Activated naive CD4-positive, alpha-beta T cell treated with anti-CD3 and anti-CD28 coated beads for 36 hours (primary cell): ENCODE measurements at regions of chr14 and their contacts with region 1.

Region 1: GRCh38 chr14:24114536-24115450 is at the starts of genes DCAF11 and NRL:
- DNase-seq: peak; percentile 99
- H3K4me3 Mint-ChIP-seq: peak within 1 kb of the TSS; percentile 99
- H3K27ac Mint-ChIP-seq: peak within 1 kb of the TSS; percentile 100
- H3K4me1 Mint-ChIP-seq: peaks cover 18% of the 10 kb centered on the region
- H3K27me3 Mint-ChIP-seq: no peaks in the 10 kb centered on the region
- total RNA-seq, gene DCAF11: 79.4 to 84.0 TPM
- total RNA-seq, gene NRL: 1.7 to 1.9 TPM

Region 2: GRCh38 chr14:23984891-23985602 is 129.7 kb before region 1 on chr14:
- CTCF ChIA-PET with region 1: interaction called, 3 read pairs
- intact Hi-C with region 1: loop called (anchors 1 kb)
- DNase-seq: no peak
- H3K4me3 Mint-ChIP-seq: no peak overlapping the region
- H3K27ac Mint-ChIP-seq: no peak overlapping the region
- H3K4me1 Mint-ChIP-seq: peaks cover 26% of the 10 kb centered on the region
- H3K27me3 Mint-ChIP-seq: no peaks in the 10 kb centered on the region

Region 3: GRCh38 chr14:24086193-24086955 is 28.4 kb before region 1 on chr14:
- CTCF ChIA-PET with region 1: interaction called, 226 read pairs
- intact Hi-C with region 1: loop called (anchors 1 kb)
- DNase-seq: no peak
- H3K4me3 Mint-ChIP-seq: no peak overlapping the region
- H3K27ac Mint-ChIP-seq: no peak overlapping the region
- H3K4me1 Mint-ChIP-seq: peaks cover 7% of the 10 kb centered on the region
- H3K27me3 Mint-ChIP-seq: no peaks in the 10 kb centered on the region

Region 4: DNA sequence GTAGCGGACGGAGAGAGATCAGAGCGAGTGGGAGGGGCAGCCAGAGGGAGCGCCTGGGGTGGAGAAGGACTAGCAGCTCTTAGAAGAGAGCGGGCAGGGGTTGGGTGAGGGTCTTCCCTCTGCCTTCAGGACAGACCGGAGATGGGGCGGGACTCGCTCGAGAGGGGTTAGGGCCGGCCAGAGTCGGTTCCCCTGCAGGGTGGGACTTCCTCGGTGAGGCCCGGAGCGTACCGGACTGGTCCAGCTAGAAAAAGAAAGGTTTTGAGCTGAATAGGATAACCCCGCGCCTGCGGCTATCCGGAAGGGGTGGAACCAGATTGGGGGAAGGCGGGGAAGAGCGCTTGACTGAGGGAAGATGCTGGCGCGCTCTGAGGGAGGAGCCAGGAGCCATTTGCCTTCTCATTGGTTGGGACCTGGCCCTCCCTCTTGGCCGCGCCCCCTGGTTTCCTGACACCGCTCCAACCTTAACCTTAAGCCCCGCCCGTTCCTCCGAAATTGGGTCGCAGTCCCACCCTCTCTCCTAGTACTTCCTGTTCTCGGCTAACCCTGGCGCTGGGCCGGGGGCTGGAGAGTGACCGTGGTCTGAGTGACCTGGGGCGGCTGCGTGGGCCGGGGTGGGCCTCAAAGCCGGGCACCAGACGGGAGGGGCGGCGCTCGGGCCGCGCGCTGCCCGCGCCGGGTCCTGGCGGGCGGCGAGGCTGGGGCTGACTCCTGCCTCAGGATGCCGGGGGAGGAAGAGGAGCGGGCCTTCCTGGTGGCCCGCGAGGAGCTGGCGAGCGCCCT is 32.4 kb after region 1 on chr14 and contains the start of gene RNF31:
- CTCF ChIA-PET with region 1: interaction called, 10 read pairs
- intact Hi-C with region 1: loop called (anchors 1 kb)
- DNase-seq: peak; percentile 99
- H3K4me3 Mint-ChIP-seq: peak within 1 kb of the TSS; percentile 97
- H3K27ac Mint-ChIP-seq: peak within 1 kb of the TSS; percentile 99
- H3K4me1 Mint-ChIP-seq: peaks cover 54% of the 10 kb centered on the region
- H3K27me3 Mint-ChIP-seq: no peaks in the 10 kb centered on the region
- total RNA-seq, gene RNF31: 51.1 to 53.8 TPM

Region 5: GRCh38 chr14:24215495-24216344 is 100.9 kb after region 1 on chr14 and contains the start of gene MDP1:
- CTCF ChIA-PET with region 1: no interaction called
- intact Hi-C with region 1: loop called (anchors 1 kb)
- DNase-seq: peak; percentile 93
- H3K4me3 Mint-ChIP-seq: peak within 1 kb of the TSS; percentile 86
- H3K27ac Mint-ChIP-seq: peak within 1 kb of the TSS; percentile 96
- H3K4me1 Mint-ChIP-seq: peaks cover 45% of the 10 kb centered on the region
- H3K27me3 Mint-ChIP-seq: no peaks in the 10 kb centered on the region
- total RNA-seq, gene MDP1: 10.2 to 13.6 TPM

Region 6: DNA sequence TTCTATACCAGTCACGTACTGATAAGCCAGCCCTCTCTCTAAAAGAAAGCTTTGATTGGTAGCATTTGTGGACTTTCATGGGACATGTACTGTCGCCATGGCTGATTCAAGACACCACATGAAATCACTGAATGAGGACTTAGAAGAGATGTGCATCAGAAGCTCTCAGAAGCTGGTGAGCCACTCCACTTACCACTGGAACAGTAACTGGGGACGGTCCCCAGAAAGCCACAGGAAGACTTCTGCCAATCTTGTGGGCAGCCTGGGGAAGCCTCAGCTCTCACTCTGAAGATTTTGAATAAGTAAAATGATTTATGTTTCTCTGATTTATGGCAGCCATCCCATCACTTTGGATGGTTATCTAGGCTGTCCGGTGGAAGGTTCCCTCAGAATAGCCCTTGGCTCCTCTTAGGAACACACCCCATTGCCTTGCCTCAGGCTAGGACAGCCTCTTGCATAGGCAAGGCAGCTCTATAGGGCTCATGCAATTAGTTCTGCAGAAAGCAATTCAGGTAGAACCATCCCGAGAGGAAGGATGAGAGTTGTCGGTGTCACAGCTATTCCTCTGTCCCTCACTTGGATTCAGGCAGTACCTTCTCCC is 175.0 kb after region 1 on chr14:
- CTCF ChIA-PET with region 1: no interaction called
- intact Hi-C with region 1: loop called (anchors 1 kb)
- DNase-seq: peak; percentile 93
- H3K4me3 Mint-ChIP-seq: no peak overlapping the region
- H3K27ac Mint-ChIP-seq: peak overlapping the region; percentile 75
- H3K4me1 Mint-ChIP-seq: peaks cover 25% of the 10 kb centered on the region
- H3K27me3 Mint-ChIP-seq: no peaks in the 10 kb centered on the region

Region 7: DNA sequence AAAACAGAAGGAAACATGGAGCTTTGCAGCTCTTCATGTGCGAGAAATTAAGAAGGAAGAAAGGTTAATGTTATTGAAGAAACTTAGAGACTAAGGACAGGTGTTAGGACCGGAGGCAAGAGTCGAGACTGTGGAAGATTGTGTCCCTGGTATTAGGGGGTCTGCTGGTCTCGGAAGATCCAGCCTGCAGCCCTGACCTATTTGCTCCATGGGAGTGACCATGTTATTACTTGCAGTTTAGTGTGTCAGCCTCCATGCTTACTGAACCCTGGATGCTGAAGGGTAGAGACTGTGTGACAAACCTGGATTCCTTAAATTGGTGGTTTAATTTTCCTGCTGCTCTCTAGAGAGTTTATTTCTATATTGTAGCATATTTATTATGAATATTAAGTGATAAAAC is 1902.5 kb after region 1 on chr14:
- CTCF ChIA-PET with region 1: no interaction called
- intact Hi-C with region 1: no loop called
- DNase-seq: no peak
- H3K4me3 Mint-ChIP-seq: no peak overlapping the region
- H3K27ac Mint-ChIP-seq: no peak overlapping the region
- H3K4me1 Mint-ChIP-seq: no peaks in the 10 kb centered on the region
- H3K27me3 Mint-ChIP-seq: no peaks in the 10 kb centered on the region